Adrenal gland (tissue), 19 donors: ENCODE measurements at regions of chr1 and their contacts with region 1.

Region 1: GRCh38 chr1:43934101-43934985 is 742 bp downstream of the ARTN start:
- DNase-seq: peak in 6 of 7 donors; percentile 53 to 81 (median 72)
- H3K4me3 ChIP-seq: peak overlapping the region in 2 of 4 donors; percentile 32 to 35
- H3K27ac ChIP-seq: no peak overlapping the region
- H3K4me1 ChIP-seq: peaks cover 8 to 15% of the 10 kb centered on the region in 2 donors
- H3K27me3 ChIP-seq: no peaks in the 10 kb centered on the region
- CTCF ChIP-seq: peak; percentile 74 to 87 (median 80)
- POLR2A ChIP-seq: no peak

Region 2: DNA sequence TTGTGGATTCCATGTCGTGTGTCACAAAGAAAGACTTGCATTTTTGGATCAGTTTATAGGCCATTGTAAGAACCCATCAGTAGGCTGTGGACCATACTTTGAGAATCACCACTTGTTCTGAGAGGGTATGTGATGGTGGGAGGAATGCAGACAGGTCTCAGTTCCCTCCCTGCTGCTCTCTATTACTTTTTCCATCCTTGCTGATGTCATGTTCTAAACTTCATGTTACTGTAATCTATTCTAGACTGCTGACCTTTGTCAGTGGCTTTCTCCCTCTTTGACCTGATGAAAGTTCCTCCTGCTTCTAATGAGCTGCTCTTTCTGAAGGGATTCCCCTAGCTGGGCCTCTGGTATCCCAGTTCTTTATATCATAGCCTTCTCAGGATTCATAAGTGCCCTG is 180.9 kb before region 1 on chr1:
- intact Hi-C with region 1: no loop called
- DNase-seq: no peak
- H3K4me3 ChIP-seq: no peak overlapping the region
- H3K27ac ChIP-seq: no peak overlapping the region
- H3K4me1 ChIP-seq: no peaks in the 10 kb centered on the region
- H3K27me3 ChIP-seq: no peaks in the 10 kb centered on the region
- CTCF ChIP-seq: no peak
- POLR2A ChIP-seq: no peak

Region 3: GRCh38 chr1:43764581-43764980 is 169.8 kb before region 1 on chr1:
- intact Hi-C with region 1: loop called (anchors 2 kb)
- DNase-seq: no peak
- H3K4me3 ChIP-seq: no peak overlapping the region
- H3K27ac ChIP-seq: no peak overlapping the region
- H3K4me1 ChIP-seq: peaks cover 0 to 12% of the 10 kb centered on the region in 2 donors
- H3K27me3 ChIP-seq: no peaks in the 10 kb centered on the region
- CTCF ChIP-seq: no peak
- POLR2A ChIP-seq: no peak